ENCODE measurements at regions of chr19 and their contacts with region 1.

Region 1: GRCh38 chr19:8180061-8180460 is 29.1 kb upstream of the CERS4 start:
- DNase-seq: no peak
- H3K4me3 Mint-ChIP-seq: no peak overlapping the region
- H3K27ac Mint-ChIP-seq: no peak overlapping the region
- H3K4me1 Mint-ChIP-seq: peaks cover 6% of the 10 kb centered on the region
- H3K27me3 Mint-ChIP-seq: peaks cover 2% of the 10 kb centered on the region

Region 2: DNA sequence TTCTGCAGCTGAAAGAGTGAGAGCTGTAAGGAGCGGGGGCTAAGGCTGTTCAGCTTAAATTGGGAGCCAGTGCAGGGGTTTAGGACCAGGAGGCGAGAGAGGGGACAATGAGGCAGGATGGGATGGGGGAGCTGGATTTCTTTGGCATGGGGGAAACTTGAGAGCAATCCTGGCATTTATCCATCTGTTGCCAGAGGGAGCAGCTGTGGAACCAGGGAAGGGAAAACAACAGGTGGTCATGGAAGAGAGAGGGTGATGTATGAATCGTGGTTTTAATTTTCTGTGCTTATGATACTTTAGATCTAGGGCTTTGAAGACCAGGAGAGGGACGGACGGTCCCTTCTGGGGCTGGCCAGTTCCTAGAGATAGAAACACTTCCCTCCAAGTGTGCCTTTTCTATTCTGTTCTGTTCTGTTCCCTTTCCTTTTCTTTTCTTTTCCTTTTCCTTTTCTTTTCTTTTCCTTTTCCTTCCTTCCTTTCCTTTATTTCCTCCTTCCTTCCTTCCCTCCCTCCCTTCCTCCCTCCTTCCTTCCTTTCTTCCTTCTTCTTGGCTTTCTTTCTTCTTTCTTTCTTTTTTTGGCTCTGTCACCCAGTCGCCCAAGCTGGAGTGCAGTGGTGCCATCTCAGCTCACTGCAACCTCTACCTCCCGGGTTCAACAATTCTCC is 143.5 kb before region 1 on chr19:
- CTCF ChIA-PET with region 1: no interaction called
- POLR2A ChIA-PET with region 1: no interaction called
- DNase-seq: no peak
- H3K4me3 Mint-ChIP-seq: no peak overlapping the region
- H3K27ac Mint-ChIP-seq: no peak overlapping the region
- H3K4me1 Mint-ChIP-seq: no peaks in the 10 kb centered on the region
- H3K27me3 Mint-ChIP-seq: peaks cover 7% of the 10 kb centered on the region

Region 3: DNA sequence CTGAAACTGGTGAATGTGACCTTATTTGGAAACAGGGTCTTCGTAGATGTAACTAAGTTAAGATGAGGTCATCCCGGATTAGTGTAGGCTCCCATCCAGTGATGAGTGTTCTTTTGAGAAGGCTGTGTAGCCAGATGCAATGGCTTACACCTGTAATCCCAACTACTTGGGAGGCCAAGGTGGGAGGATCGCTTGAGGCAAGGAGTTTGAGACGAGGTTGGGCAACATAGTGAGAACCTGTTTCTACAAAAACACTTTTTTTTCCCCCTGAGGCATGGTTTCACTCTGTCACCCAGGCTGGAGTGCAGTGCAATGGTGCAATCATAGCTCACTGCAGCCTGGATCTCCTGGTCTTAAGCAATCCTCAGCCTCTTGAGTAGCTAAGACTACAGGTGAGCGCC is 67.0 kb before region 1 on chr19:
- CTCF ChIA-PET with region 1: no interaction called
- POLR2A ChIA-PET with region 1: no interaction called
- DNase-seq: no peak
- H3K4me3 Mint-ChIP-seq: no peak overlapping the region
- H3K27ac Mint-ChIP-seq: no peak overlapping the region
- H3K4me1 Mint-ChIP-seq: no peaks in the 10 kb centered on the region
- H3K27me3 Mint-ChIP-seq: peaks cover 4% of the 10 kb centered on the region

Region 4: GRCh38 chr19:8194528-8195267 is 14.6 kb after region 1 on chr19:
- CTCF ChIA-PET with region 1: interaction called, 4 read pairs
- POLR2A ChIA-PET with region 1: interaction called, 21 read pairs
- DNase-seq: peak; percentile 82
- H3K4me3 Mint-ChIP-seq: peak overlapping the region; percentile 71
- H3K27ac Mint-ChIP-seq: peak overlapping the region; percentile 99
- H3K4me1 Mint-ChIP-seq: peaks cover 46% of the 10 kb centered on the region
- H3K27me3 Mint-ChIP-seq: no peaks in the 10 kb centered on the region

Measured in activated CD4-positive, alpha-beta memory T cell treated with anti-CD3 and anti-CD28 coated beads, Interleukin-2, amount 10 ng/mL, durations not matched to agents 7 days and 5 days (primary cell).